Breast epithelium (tissue), 4 donors: ENCODE measurements at regions of chr22 and their contacts with region 1.

Region 1: GRCh38 chr22:47826016-47826415 is 1063.6 kb downstream of the TBC1D22A start:
- DNase-seq: no peak
- H3K4me3 ChIP-seq: no peak overlapping the region
- H3K27ac ChIP-seq: no peak overlapping the region
- H3K4me1 ChIP-seq: no peaks in the 10 kb centered on the region
- H3K27me3 ChIP-seq: peaks cover 0 to under 1% of the 10 kb centered on the region in 2 donors
- CTCF ChIP-seq: no peak
- POLR2A ChIP-seq: no peak

Region 2: GRCh38 chr22:47954115-47954514 is 128.1 kb after region 1 on chr22:
- intact Hi-C with region 1: loop called (anchors 2 kb)
- DNase-seq: no peak
- H3K4me3 ChIP-seq: no peak overlapping the region
- H3K27ac ChIP-seq: no peak overlapping the region
- H3K4me1 ChIP-seq: no peaks in the 10 kb centered on the region
- H3K27me3 ChIP-seq: peaks cover 0 to 19% of the 10 kb centered on the region in 2 donors
- CTCF ChIP-seq: no peak
- POLR2A ChIP-seq: no peak